ENCODE measurements at regions of chr19 and their contacts with region 1.

Region 1: GRCh38 chr19:17346109-17346671 is 8.8 kb downstream of the GTPBP3 start:
- DNase-seq: peak; percentile 88
- CTCF ChIP-seq: peak; percentile 97

Region 2: GRCh38 chr19:17385878-17386611 is 39.9 kb after region 1 on chr19:
- in situ Hi-C with region 1: loop called (anchors 5 kb)
- DNase-seq: peak; percentile 80
- CTCF ChIP-seq: peak; percentile 96

Region 3: DNA sequence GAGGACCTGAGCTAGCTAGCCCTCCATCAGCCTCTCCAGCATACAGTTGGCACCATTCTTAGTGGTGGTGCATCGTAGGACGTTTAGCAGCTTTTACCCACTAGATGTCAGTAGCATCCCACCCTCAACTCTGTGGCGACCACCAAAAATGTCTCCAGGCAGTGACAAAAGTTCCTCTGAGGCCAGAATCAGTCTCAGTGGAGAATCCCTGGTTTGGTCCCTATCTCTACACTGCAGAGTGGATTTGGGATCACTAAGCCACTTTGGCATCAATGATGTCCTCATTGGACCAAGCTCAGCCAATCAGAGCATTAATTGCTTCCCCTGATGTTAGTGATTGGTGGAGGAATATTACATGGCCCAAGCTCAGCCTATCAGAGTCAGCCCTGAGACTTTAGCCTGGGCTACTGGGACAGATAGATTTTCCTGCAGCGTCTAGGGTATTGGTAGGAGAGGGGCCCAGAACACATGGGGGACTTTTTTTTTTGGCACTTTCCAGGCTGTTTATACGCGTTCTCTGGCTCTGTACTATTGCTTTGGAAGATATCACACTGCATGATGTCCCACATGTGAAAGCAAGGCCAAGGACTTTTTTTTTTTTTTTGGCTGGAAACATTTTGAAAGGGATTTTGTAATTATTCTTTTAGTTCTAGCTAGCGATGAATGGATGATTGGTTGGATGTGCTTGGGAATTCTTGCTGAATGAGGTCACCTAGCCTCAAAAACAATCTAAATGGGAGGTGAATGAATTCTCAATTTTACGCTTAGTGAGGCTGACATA is 95.2 kb after region 1 on chr19:
- in situ Hi-C with region 1: no loop called
- DNase-seq: peak; percentile 58
- CTCF ChIP-seq: peak; percentile 59